ENCODE measurements at regions of chr12 and their contacts with region 1.

Region 1: GRCh38 chr12:68451261-68452077 is 119.3 kb upstream of the MDM1 start:
- DNase-seq: peak; percentile 22
- ATAC-seq: peak; percentile 78
- H3K4me3 Mint-ChIP-seq: peak overlapping the region; percentile 76
- H3K27ac Mint-ChIP-seq: peak overlapping the region; percentile 85
- H3K4me1 Mint-ChIP-seq: peaks cover 94% of the 10 kb centered on the region
- H3K27me3 Mint-ChIP-seq: no peaks in the 10 kb centered on the region
- CTCF ChIP-seq: no peak

Region 2: DNA sequence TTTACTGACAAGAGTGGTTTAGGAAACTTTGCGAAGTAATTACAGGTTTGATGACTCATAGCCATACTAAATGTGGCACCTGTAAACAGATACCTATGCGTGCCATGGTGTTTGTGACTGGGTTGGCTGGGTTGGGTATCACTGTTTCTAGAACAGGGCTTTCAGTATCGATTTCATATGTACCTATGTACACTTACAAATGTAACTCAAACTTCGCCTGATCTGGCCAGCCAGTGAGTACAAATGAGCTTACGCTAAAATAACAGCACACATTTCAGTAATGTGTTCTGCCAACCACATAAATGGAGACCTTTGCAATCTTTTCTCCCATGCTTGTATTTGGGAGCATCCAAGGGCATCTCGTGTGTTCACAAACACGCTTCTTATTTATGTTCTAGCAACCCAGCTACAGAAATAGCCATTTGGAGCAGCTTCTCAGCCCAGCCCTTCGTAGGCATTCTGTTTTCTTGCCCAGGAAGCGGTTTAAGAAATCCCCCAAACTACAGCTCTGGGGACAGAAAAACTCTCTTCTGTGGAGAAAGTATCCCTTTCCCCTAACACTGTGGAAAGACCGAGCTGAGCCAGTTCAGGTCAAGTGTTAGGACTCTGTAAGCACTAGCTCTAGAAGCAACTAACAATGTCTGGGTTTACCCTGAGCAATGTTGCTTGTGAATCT is 77.0 kb before region 1 on chr12:
- CTCF ChIA-PET with region 1: no interaction called
- POLR2A ChIA-PET with region 1: no interaction called
- intact Hi-C with region 1: loop called (anchors 2 kb)
- DNase-seq: no peak
- ATAC-seq: peak; percentile 78
- H3K4me3 Mint-ChIP-seq: peak overlapping the region; percentile 32
- H3K27ac Mint-ChIP-seq: peak overlapping the region; percentile 77
- H3K4me1 Mint-ChIP-seq: peaks cover 33% of the 10 kb centered on the region
- H3K27me3 Mint-ChIP-seq: no peaks in the 10 kb centered on the region
- CTCF ChIP-seq: no peak

Region 3: DNA sequence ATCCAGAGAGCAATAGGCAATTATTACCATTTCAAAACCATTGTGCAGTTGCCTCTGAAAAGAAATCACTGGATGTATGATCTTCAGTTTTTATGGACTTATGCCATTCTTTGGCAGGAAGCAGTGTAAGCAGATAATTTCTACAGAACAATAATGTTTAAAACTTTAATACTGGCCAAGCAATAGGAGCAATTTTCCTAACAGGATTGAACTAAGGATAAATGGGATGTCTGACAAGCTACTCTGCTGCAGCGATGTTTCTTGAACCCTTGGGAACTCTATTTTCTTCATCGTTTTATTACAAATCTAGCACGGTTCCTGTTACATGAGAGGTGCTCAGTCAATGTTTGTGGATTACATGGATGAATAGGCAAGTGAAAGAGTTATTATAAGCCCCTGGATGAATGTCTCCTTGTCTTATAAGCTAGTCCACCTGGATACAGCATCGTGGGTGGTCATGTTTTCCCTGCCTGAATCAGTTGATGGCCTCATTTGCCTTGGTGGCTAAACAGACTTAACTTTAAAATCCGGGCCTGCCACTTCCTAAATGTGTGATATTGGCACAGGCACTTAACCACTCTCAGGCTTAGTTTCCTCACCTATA is 51.1 kb before region 1 on chr12:
- CTCF ChIA-PET with region 1: no interaction called
- POLR2A ChIA-PET with region 1: no interaction called
- intact Hi-C with region 1: no loop called
- DNase-seq: no peak
- ATAC-seq: no peak
- H3K4me3 Mint-ChIP-seq: no peak overlapping the region
- H3K27ac Mint-ChIP-seq: no peak overlapping the region
- H3K4me1 Mint-ChIP-seq: no peaks in the 10 kb centered on the region
- H3K27me3 Mint-ChIP-seq: no peaks in the 10 kb centered on the region
- CTCF ChIP-seq: no peak

Region 4: GRCh38 chr12:68482660-68483059 is 31.2 kb after region 1 on chr12:
- CTCF ChIA-PET with region 1: no interaction called
- POLR2A ChIA-PET with region 1: interaction called, 8 read pairs
- intact Hi-C with region 1: loop called (anchors 2 kb)
- DNase-seq: no peak
- ATAC-seq: peak; percentile 43
- H3K4me3 Mint-ChIP-seq: no peak overlapping the region
- H3K27ac Mint-ChIP-seq: peak overlapping the region; percentile 50
- H3K4me1 Mint-ChIP-seq: peaks cover 39% of the 10 kb centered on the region
- H3K27me3 Mint-ChIP-seq: no peaks in the 10 kb centered on the region
- CTCF ChIP-seq: no peak

Region 5: DNA sequence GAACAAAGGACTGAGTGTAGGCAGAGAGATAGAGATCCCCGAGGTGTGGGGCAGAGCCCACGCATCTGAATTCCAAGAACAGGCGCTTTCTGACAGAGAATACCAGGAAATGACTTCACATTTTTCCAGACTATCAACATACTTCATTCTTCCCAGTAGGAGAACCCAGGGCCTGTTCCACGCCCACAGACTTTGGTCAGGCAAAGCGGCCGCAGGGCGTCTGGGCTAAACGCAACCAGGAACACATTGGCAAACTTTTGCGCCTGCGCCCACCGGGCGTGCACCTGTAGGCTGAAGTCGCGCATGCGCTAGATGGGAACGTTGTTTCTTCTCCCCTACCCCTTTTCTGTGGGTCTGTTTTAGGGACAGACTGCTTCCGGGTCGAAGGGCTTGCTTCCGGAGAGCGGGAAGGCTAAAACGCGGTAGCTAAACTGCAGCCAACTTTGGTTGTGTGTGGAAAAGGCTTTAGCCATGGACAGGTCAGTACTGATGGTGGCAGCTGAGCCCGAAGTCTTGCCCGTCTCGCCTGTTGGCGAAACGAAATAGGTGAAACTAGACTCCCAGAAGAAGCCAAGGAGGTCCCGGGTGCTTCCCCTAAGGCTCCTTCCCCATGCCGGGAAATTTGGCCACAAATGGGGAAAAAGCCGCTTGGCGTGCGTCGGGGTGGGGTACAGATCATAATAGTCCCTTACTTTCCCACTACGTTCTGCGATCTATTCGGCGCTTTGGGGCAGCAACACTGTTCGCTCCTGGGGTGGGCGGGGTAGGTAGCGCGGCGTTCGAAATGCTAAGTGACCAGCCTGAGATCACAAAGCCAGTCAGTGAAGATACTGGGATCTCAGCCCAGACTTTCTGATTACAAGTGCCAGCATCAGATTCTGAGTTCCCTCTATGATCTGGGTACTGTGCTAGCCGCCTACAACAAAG is 235.4 kb after region 1 on chr12 and contains the start of gene NUP107:
- CTCF ChIA-PET with region 1: no interaction called
- POLR2A ChIA-PET with region 1: interaction called, 5 read pairs
- intact Hi-C with region 1: loop called (anchors 2 kb)
- DNase-seq: peak; percentile 93
- ATAC-seq: peak; percentile 97
- H3K4me3 Mint-ChIP-seq: peak within 1 kb of the TSS; percentile 98
- H3K27ac Mint-ChIP-seq: peak within 1 kb of the TSS; percentile 97
- H3K4me1 Mint-ChIP-seq: peaks cover 33% of the 10 kb centered on the region
- H3K27me3 Mint-ChIP-seq: no peaks in the 10 kb centered on the region
- CTCF ChIP-seq: no peak
- total RNA-seq, gene NUP107: 75.0 and 90.8 TPM in 2 replicates